Vagina (tissue), 2 donors: ENCODE measurements at regions of chr12 and their contacts with region 1.

Region 1: GRCh38 chr12:49954863-49955830 is 4.6 kb downstream of the AQP2 start:
- DNase-seq: no peak
- H3K4me3 ChIP-seq: no peak overlapping the region
- H3K27ac ChIP-seq: no peak overlapping the region
- H3K4me1 ChIP-seq: no peaks in the 10 kb centered on the region
- H3K27me3 ChIP-seq: no peaks in the 10 kb centered on the region
- CTCF ChIP-seq: no peak
- POLR2A ChIP-seq: no peak

Region 2: DNA sequence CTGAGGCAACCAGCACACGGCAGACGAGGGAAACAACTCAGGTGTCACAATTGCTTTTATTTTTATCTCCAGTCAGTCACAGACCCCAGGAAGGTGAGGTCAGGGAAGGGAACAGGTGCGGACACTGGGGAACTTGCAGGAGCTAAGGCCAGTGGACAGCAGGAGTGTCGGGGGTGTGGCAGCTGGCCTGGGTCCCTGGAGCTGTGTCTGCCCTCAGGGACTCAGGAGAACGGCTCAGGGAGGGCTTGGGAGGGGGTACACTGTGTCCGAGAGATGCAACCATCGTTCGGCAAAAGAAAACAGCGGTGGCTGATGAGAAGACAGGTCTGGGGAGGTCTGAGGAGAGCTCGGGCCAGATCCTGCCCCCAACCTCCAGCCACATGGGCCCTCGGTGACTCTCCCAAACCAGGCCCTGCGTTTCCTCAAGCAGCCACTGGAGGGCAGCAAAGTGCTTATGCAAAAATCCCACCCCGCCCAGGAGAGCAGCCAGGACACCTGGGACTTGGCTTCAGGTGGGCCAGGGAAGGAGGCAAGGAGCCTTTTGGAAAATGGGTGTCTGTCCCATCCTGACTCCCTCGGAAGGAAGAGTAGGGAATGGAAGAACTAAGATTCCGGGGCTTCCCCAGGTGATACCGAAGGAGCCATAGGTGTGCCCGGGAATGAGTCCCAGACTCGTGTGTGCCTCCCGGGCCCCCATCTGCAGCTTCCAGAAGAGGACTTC is 88.1 kb before region 1 on chr12:
- intact Hi-C with region 1: loop called (anchors 5 kb)
- DNase-seq: peak in 1 of 2 donors; percentile 87
- H3K4me3 ChIP-seq: no peak overlapping the region
- H3K27ac ChIP-seq: peak overlapping the region; percentile 85
- H3K4me1 ChIP-seq: peaks cover 32% of the 10 kb centered on the region
- H3K27me3 ChIP-seq: no peaks in the 10 kb centered on the region
- CTCF ChIP-seq: peak; percentile 52 to 96 (median 94)
- POLR2A ChIP-seq: no peak